ENCODE measurements at regions of chr9 and their contacts with region 1.

Region 1: GRCh38 chr9:35835216-35835632 is 6.2 kb downstream of the TMEM8B start:
- DNase-seq: no peak
- ATAC-seq: peak; percentile 35; the same call in 2 of the 3 replicates
- H3K4me3 ChIP-seq: no peak overlapping the region
- H3K27ac ChIP-seq: peak overlapping the region; percentile 54; the same call in 1 of the 2 replicates
- H3K4me1 ChIP-seq: peaks cover 29% of the 10 kb centered on the region
- H3K27me3 ChIP-seq: no peaks in the 10 kb centered on the region
- CTCF ChIP-seq: peak; percentile 28 to 35 (median 32); a peak in 5 of 6 replicates
- EP300 ChIP-seq: no peak
- POLR2A ChIP-seq: no peak
- RAD21 ChIP-seq: no peak

Region 2: DNA sequence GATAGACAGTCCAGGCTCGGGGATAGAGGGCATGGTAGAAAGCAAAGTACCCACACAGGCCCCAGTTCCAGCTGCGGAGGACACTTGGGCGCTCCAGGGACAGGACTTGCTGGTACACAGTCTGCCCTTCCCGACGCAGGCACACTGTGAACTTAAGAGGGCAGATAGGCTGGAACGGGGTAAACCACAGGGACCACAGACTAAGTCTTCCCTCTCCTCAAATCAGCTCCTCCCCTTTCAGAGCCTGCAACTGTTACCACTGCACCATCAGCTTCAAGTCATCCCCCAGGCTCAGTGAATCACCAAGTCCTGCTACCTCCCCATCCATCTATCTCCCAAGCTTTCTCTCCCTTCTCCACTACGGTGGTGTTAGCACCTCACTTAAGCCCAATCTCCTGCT is 93.5 kb before region 1 on chr9:
- CTCF ChIA-PET with region 1: no interaction called
- POLR2A ChIA-PET with region 1: no interaction called
- RAD21 ChIA-PET with region 1: no interaction called
- SMC1A ChIA-PET with region 1: no interaction called
- in situ Hi-C with region 1: no loop called
- intact Hi-C with region 1: no loop called
- DNase-seq: no peak
- ATAC-seq: no peak
- H3K4me3 ChIP-seq: no peak overlapping the region
- H3K27ac ChIP-seq: no peak overlapping the region
- H3K4me1 ChIP-seq: no peaks in the 10 kb centered on the region; the same call in 1 of the 2 replicates
- H3K27me3 ChIP-seq: no peaks in the 10 kb centered on the region
- CTCF ChIP-seq: no peak
- EP300 ChIP-seq: no peak
- POLR2A ChIP-seq: no peak
- RAD21 ChIP-seq: no peak

Region 3: DNA sequence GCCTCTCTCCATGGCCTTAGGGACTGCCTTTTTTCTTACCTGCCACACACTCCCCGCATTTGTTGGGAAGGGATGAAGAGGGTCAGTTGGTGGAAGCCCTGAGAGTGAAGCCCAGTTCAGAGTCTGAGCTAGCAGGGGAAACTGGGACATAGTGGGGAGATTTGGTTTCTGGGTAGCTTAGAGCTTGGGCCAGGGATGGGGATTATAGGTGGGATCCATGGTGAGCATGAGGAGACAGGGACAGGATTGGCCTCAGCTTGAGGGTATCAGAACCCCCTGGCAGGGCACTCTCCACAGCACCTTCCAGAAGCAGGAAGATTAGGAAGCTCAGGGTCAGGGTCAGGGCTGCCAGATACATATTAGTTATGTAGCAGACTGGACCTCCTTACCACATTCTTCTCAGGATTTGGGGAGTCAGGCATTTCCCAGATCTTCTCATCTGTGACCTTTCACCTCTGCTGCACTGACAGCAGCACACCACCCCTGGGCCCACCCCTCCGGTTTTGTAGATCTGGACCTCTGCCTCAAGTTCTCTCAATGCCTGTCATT is 17.1 kb after region 1 on chr9:
- CTCF ChIA-PET with region 1: interaction called, 34 read pairs
- POLR2A ChIA-PET with region 1: interaction called, 80 read pairs
- RAD21 ChIA-PET with region 1: interaction called, 21 read pairs
- SMC1A ChIA-PET with region 1: interaction called, 118 read pairs
- in situ Hi-C with region 1: no loop called
- intact Hi-C with region 1: no loop called
- DNase-seq: no peak
- ATAC-seq: no peak
- H3K4me3 ChIP-seq: no peak overlapping the region
- H3K27ac ChIP-seq: no peak overlapping the region
- H3K4me1 ChIP-seq: peaks cover 13% of the 10 kb centered on the region
- H3K27me3 ChIP-seq: no peaks in the 10 kb centered on the region
- CTCF ChIP-seq: no peak
- EP300 ChIP-seq: no peak
- POLR2A ChIP-seq: no peak
- RAD21 ChIP-seq: no peak

Measured in GM12878 (cell line).